Right ventricle myocardium inferior (tissue), 1 donor: ENCODE measurements at regions of chr12 and their contacts with region 1.

Region 1: DNA sequence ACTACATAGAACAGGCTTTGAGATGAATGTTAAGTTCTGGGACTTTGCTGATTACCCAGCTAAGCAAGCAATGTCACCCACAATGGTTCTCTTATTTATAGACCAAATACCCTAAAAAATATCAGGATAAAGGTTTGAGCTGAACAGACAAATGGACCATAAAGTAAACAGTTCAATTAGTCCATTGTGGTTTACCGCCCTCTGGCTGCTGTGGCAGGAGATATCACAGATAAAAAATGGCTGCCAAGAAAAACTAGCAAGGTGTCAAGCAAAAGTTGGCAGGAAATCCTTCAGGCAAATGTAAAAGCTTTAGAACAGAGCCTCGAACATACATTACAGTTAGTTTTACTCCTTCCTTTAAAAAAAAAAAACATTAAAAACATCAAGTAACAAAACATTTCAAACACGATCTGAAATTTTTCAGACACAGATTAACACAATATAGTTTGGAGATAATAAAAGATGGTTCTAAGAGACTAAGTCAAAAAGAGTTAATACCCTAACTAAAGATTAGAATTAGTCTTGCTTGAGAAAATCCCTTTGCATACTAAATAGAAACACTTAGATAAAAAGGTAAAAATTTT is 41.3 kb downstream of the MED13L start:
- DNase-seq: no peak
- ATAC-seq: peak; percentile 71

Region 2: GRCh38 chr12:115998119-115998633 is 238.1 kb before region 1 on chr12:
- intact Hi-C with region 1: loop called (anchors 5 kb)
- DNase-seq: no peak
- ATAC-seq: no peak

Region 3: GRCh38 chr12:116015525-116015924 is 220.7 kb before region 1 on chr12:
- intact Hi-C with region 1: loop called (anchors 1 kb)
- DNase-seq: no peak
- ATAC-seq: peak; percentile 76

Region 4: GRCh38 chr12:116142936-116143898 is 93.0 kb before region 1 on chr12:
- intact Hi-C with region 1: loop called (anchors 5 kb)
- DNase-seq: no peak
- ATAC-seq: no peak